Panc1 (cell line): ENCODE measurements at regions of chr10 and their contacts with region 1.

Region 1: DNA sequence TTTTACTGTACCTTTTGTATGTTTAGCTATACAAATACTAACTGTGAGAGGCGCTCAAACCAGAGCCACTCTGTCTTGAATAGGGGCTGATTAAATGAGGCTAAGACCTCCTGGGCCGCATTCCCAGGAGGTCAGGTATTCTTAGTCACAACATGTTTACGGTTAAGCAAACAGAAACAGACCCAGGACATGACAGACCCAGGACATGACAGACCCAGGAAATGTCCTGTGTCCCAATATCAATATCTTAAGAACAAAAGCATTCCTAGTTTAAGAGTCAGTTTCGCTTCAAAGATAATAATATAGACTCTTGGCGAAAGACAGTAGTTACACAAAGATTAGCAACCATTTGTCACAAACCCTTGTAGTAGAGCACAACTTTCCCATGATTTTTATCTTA is 304.5 kb downstream of the CCSER2 start:
- DNase-seq: no peak
- ATAC-seq: no peak
- H3K4me3 ChIP-seq: no peak overlapping the region
- H3K27ac ChIP-seq: no peak overlapping the region
- H3K4me1 ChIP-seq: no peaks in the 10 kb centered on the region
- H3K27me3 ChIP-seq: no peaks in the 10 kb centered on the region
- CTCF ChIP-seq: no peak

Region 2: DNA sequence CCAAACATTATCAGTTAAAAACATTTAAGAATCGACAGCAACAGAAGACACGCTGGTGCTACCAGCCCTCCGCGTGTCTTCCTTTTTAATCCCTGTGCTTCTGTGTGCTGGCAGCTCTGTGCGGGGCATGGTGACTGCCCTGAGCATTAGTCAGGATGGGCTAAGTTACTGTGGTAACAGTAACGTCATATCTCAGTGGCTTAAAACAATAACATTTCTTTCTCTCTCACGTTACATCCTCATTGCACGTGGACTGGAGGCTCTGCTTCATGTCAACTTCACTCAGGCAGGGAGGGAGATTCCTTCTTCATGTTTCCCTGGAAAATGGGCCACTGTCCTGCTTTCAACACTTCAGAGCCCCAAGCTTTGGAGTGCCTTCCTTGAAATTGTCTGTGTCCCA is 74.0 kb after region 1 on chr10:
- CTCF ChIA-PET with region 1: no interaction called
- POLR2A ChIA-PET with region 1: no interaction called
- in situ Hi-C with region 1: no loop called
- intact Hi-C with region 1: no loop called
- DNase-seq: no peak
- ATAC-seq: no peak
- H3K4me3 ChIP-seq: no peak overlapping the region
- H3K27ac ChIP-seq: no peak overlapping the region
- H3K4me1 ChIP-seq: no peaks in the 10 kb centered on the region
- H3K27me3 ChIP-seq: peaks cover 14% of the 10 kb centered on the region
- CTCF ChIP-seq: no peak

Region 3: GRCh38 chr10:84783386-84783785 is 150.5 kb after region 1 on chr10:
- CTCF ChIA-PET with region 1: no interaction called
- POLR2A ChIA-PET with region 1: no interaction called
- in situ Hi-C with region 1: no loop called
- intact Hi-C with region 1: no loop called
- DNase-seq: peak; percentile 17
- ATAC-seq: peak; percentile 86
- H3K4me3 ChIP-seq: no peak overlapping the region
- H3K27ac ChIP-seq: no peak overlapping the region
- H3K4me1 ChIP-seq: no peaks in the 10 kb centered on the region
- H3K27me3 ChIP-seq: no peaks in the 10 kb centered on the region
- CTCF ChIP-seq: peak; percentile 85

Region 4: GRCh38 chr10:85080934-85081333 is 448.1 kb after region 1 on chr10:
- CTCF ChIA-PET with region 1: no interaction called
- POLR2A ChIA-PET with region 1: interaction called, 13 read pairs
- in situ Hi-C with region 1: no loop called
- intact Hi-C with region 1: no loop called
- DNase-seq: no peak
- ATAC-seq: no peak
- H3K4me3 ChIP-seq: no peak overlapping the region
- H3K27ac ChIP-seq: no peak overlapping the region
- H3K4me1 ChIP-seq: no peaks in the 10 kb centered on the region
- H3K27me3 ChIP-seq: no peaks in the 10 kb centered on the region
- CTCF ChIP-seq: no peak; the same call in 1 of the 2 replicates